Uterus (tissue), 4 donors: ENCODE measurements at regions of chr21 and their contacts with region 1.

Region 1: GRCh38 chr21:26027696-26028095 is 142.9 kb downstream of the APP start:
- DNase-seq: no peak
- H3K4me3 ChIP-seq: no peak overlapping the region
- H3K27ac ChIP-seq: no peak overlapping the region
- H3K4me1 ChIP-seq: peaks cover 0 to 4% of the 10 kb centered on the region in 2 donors
- H3K27me3 ChIP-seq: no peaks in the 10 kb centered on the region
- CTCF ChIP-seq: no peak
- POLR2A ChIP-seq: no peak

Region 2: DNA sequence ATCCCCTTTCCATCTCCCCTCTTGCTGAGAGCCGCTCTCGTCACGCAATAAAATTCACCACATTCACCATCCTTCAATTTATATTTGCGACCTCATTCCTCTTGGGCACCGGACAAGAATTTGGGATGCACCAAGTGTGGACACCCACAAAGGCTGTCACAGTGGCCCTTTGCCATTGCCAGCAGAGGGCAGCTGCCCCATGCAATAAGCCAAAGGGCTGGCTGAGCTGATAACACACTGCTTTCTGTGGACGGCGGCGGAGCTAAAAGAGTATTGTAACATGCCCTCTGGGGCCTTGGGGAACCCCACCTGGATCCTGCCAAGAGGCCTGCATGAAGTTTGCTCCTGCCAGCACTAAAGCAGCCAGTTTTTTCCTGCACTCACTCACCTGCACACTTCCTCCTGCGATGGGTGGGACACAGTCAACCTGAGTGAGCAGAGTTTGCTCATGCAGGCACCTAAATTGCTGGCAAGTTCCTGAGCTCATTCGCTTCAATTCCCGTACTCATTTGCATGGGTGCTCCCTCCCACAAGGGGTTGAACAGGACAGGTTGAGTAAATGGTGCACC is 1731.5 kb after region 1 on chr21:
- intact Hi-C with region 1: loop called (anchors 5 kb)
- DNase-seq: no peak
- H3K4me3 ChIP-seq: no peak overlapping the region
- H3K27ac ChIP-seq: no peak overlapping the region
- H3K4me1 ChIP-seq: no peaks in the 10 kb centered on the region
- H3K27me3 ChIP-seq: no peaks in the 10 kb centered on the region
- CTCF ChIP-seq: no peak
- POLR2A ChIP-seq: no peak